GM10248 (cell line): ENCODE measurements at regions of chr7 and their contacts with region 1.

Region 1: GRCh38 chr7:27196287-27196767 is 3.6 kb downstream of the HOXA13 start:
- DNase-seq: peak; percentile 61
- CTCF ChIP-seq: peak; percentile 77

Region 2: GRCh38 chr7:27179503-27180430 is 16.6 kb before region 1 on chr7:
- CTCF ChIA-PET with region 1: interaction called, 41 read pairs
- POLR2A ChIA-PET with region 1: no interaction called
- DNase-seq: peak; percentile 76
- CTCF ChIP-seq: peak; percentile 66

Region 3: DNA sequence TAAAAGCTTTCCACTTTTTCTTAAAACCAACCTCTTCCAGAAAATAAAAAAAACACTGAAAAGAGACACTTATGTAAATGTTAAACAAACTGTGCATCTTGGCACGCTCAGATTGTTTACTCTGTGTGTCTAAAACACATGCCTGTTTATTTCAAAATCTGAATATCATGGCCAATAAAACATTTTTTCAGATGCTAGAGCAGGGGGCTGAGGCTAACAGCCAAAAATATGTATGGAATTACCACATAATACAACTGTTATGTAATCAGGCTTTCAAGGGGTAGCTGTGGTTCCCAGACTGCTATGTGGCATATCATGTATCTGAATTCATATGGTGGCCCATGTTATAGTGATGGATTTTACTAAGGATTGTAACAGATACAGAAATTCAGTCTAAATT is 336.0 kb after region 1 on chr7:
- CTCF ChIA-PET with region 1: no interaction called
- POLR2A ChIA-PET with region 1: no interaction called
- DNase-seq: no peak
- CTCF ChIP-seq: no peak

Region 4: GRCh38 chr7:27921081-27921836 is 724.9 kb after region 1 on chr7:
- CTCF ChIA-PET with region 1: interaction called, 79 read pairs
- POLR2A ChIA-PET with region 1: no interaction called
- DNase-seq: peak; percentile 40
- CTCF ChIP-seq: peak; percentile 54

Region 5: DNA sequence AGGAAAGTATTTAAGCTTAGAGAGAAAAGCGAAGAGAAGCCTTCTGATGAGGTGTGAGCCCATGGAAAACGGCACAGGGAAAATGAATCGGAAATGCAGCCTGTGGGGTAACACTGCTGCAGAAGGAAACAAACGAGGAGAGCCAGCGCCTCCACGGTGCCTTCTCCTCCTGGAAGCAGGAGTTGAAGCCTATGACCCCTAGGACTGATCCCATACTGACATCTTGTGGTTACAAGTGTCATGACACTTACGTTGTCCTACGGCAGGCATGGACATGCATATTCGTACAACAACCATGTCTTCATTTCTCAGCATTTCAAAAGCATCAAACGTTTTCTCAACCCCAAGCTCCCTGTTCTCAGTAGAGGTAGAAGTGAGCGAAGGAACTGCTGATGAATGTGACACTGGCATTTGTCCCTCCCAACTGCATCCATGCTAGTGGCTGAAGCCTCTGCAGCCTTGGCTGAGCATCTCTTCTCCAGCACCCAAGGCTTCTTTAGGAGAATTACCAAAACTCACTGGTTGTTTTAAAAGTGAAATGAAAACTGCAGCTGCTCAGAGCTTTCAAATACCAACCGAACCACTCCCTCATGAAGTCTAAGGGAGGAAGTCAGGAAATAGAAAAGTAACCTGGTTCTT is 824.1 kb after region 1 on chr7:
- CTCF ChIA-PET with region 1: interaction called, 37 read pairs
- POLR2A ChIA-PET with region 1: no interaction called
- DNase-seq: peak; percentile 71
- CTCF ChIP-seq: peak; percentile 88

Region 6: DNA sequence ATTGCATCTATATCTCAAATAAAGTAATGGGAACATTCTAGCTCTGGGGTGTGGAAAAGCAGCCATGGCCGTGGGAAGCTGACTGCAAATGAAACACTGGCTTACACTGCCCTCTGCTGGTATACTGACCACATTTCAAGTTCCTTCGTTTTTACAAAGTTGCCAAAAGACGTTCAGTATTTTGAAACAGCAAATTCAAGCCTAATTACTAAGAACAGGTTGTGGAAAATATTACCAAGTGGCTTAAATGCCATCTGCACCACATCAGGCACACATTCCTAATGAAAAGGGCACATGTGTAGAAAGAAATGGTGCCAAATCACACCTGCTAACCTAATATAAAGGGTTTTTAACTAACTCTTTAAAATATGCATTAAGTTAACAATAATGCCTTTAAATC is 900.4 kb after region 1 on chr7:
- CTCF ChIA-PET with region 1: interaction called, 26 read pairs
- POLR2A ChIA-PET with region 1: no interaction called
- DNase-seq: peak; percentile 65
- CTCF ChIP-seq: peak; percentile 73